ENCODE measurements at regions of chr12 and their contacts with region 1.

Region 1: GRCh38 chr12:116533343-116534251 is 25.6 kb upstream of the MAP1LC3B2 start:
- DNase-seq: peak; percentile 58 to 89 (median 70)
- ATAC-seq: peak; percentile 91
- H3K4me3 ChIP-seq: peak overlapping the region; percentile 67
- H3K4me3 Mint-ChIP-seq: peak overlapping the region; percentile 89
- H3K27ac ChIP-seq: no peak overlapping the region
- H3K27ac Mint-ChIP-seq: peak overlapping the region; percentile 22
- H3K4me1 ChIP-seq: peaks cover 28% of the 10 kb centered on the region
- H3K4me1 Mint-ChIP-seq: peaks cover 28% of the 10 kb centered on the region
- H3K27me3 ChIP-seq: no peaks in the 10 kb centered on the region
- H3K27me3 Mint-ChIP-seq: no peaks in the 10 kb centered on the region
- CTCF ChIP-seq: no peak

Region 2: DNA sequence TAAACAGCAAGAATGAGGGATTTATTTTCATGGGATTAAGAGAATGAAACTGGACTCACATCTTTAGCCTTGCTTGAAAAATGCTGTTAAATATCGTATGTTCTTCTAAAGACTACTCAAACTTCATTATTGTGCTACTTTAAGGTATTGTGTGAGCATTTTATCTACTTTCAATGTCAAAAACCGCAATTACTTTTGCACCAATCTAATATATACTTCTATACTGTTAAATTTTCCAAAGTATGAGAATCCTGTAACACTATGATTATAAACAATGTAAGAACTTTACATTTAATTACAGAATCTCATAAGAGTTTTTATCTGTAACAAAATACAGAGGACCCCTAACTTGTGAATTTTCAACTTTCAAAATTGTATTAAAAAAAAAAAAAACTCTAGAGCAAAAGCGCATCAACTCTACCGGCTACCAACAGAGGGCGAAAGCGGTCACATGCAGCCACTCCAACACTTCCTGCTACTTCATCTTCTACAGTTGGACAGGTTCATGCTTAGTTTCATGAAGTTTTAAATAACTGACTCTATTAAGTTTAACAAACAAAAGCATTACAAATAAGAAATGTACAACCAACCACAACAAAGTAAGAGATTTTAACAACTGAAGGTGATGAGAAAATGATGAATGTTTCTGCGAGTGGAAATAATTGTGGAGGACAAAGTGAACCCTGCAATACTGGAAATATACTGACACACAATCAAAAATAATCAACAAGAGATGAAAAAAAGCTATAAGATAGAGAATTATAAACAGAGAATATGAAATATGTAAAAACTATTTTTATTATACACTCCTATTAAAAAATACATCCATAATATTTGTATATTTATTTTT is 467.0 kb before region 1 on chr12:
- CTCF ChIA-PET with region 1: no interaction called
- POLR2A ChIA-PET with region 1: interaction called, 4 read pairs
- intact Hi-C with region 1: loop called in 1 of 2 experiments (anchors 10 kb)
- DNase-seq: peak; percentile 32 to 80 (median 44)
- ATAC-seq: peak; percentile 89
- H3K4me3 ChIP-seq: no peak overlapping the region
- H3K4me3 Mint-ChIP-seq: no peak overlapping the region
- H3K27ac ChIP-seq: no peak overlapping the region
- H3K27ac Mint-ChIP-seq: no peak overlapping the region
- H3K4me1 ChIP-seq: no peaks in the 10 kb centered on the region
- H3K4me1 Mint-ChIP-seq: peaks cover 77% of the 10 kb centered on the region
- H3K27me3 ChIP-seq: no peaks in the 10 kb centered on the region
- H3K27me3 Mint-ChIP-seq: no peaks in the 10 kb centered on the region
- CTCF ChIP-seq: peak; percentile 90

Region 3: GRCh38 chr12:116559162-116559935 is 25.8 kb after region 1 on chr12 and contains the start of gene MAP1LC3B2:
- CTCF ChIA-PET with region 1: no interaction called
- POLR2A ChIA-PET with region 1: interaction called, 39 read pairs
- intact Hi-C with region 1: loop called (anchors 2 kb)
- DNase-seq: peak; percentile 53 to 92 (median 66)
- ATAC-seq: peak; percentile 79
- H3K4me3 ChIP-seq: peak within 1 kb of the TSS; percentile 43
- H3K4me3 Mint-ChIP-seq: peak within 1 kb of the TSS; percentile 90
- H3K27ac ChIP-seq: peak within 1 kb of the TSS; percentile 59 to 79
- H3K27ac Mint-ChIP-seq: peak within 1 kb of the TSS; percentile 97
- H3K4me1 ChIP-seq: peaks cover 49% of the 10 kb centered on the region
- H3K4me1 Mint-ChIP-seq: peaks cover 61% of the 10 kb centered on the region
- H3K27me3 ChIP-seq: no peaks in the 10 kb centered on the region
- H3K27me3 Mint-ChIP-seq: no peaks in the 10 kb centered on the region
- CTCF ChIP-seq: no peak
- total RNA-seq, gene MAP1LC3B2: 1.5 to 2.1 TPM